MCF 10A (cell line): ENCODE measurements at regions of chr4 and their contacts with region 1.

Region 1: DNA sequence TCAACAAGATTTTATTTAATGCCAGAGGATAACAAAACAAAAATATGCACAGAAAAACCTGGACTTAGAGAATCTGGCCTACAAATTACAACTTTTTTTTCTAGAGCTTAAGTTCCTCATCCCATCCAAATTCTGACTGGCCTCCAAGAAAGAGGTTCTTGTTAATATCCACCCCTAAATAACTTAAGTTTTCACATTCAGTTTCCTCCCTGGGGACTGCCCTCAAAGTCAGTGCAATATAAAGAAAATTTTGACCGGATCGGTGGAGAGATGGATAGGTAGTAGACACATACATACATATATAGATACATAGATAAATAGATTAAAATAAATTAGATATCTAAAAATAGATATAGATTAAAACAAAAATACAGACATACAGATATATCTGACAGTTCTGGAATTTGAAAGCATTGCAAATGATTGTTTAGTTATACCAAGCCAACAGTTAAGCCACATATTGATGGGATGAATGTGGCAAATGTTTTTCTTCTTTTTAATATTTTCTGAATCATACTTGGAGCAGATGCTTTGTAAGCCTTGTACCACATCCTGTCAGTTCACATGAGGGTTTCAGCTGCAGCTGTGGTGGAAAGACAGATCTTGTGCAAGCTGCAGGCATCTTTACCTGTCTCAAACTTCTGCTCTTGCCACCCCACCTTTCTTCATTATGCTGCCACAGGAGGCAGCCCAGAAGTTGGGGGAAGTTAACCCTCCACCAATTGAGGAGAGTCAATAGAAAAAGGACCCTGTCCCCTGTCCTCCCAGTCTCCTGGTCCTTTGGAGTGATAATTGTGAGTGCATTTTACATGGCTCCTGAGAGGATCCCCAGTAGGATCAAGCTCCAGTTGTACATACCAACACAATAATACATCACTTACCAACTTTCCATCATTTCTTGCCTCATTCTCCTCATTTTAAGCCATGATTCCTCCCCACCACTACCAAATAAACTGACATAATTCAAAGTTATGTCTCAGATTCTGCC is 58.5 kb upstream of the PRDM8 start:
- DNase-seq: peak; percentile 56
- H3K4me3 Mint-ChIP-seq: no peak overlapping the region
- H3K27ac Mint-ChIP-seq: no peak overlapping the region
- H3K4me1 Mint-ChIP-seq: peaks cover 30% of the 10 kb centered on the region
- H3K27me3 Mint-ChIP-seq: no peaks in the 10 kb centered on the region
- CTCF ChIP-seq: no peak

Region 2: GRCh38 chr4:80036949-80037685 is 101.7 kb before region 1 on chr4:
- CTCF ChIA-PET with region 1: no interaction called
- POLR2A ChIA-PET with region 1: no interaction called
- intact Hi-C with region 1: no loop called
- DNase-seq: no peak
- H3K4me3 Mint-ChIP-seq: no peak overlapping the region
- H3K27ac Mint-ChIP-seq: peak overlapping the region; percentile 29
- H3K4me1 Mint-ChIP-seq: no peaks in the 10 kb centered on the region
- H3K27me3 Mint-ChIP-seq: no peaks in the 10 kb centered on the region
- CTCF ChIP-seq: no peak

Region 3: GRCh38 chr4:80125252-80126177 is 13.3 kb before region 1 on chr4:
- CTCF ChIA-PET with region 1: interaction called, 5 read pairs
- POLR2A ChIA-PET with region 1: interaction called, 12 read pairs
- intact Hi-C with region 1: no loop called
- DNase-seq: peak; percentile 61
- H3K4me3 Mint-ChIP-seq: no peak overlapping the region
- H3K27ac Mint-ChIP-seq: peak overlapping the region; percentile 70
- H3K4me1 Mint-ChIP-seq: peaks cover 36% of the 10 kb centered on the region
- H3K27me3 Mint-ChIP-seq: no peaks in the 10 kb centered on the region
- CTCF ChIP-seq: peak; percentile 53

Region 4: GRCh38 chr4:80295336-80295735 is 156.5 kb after region 1 on chr4:
- CTCF ChIA-PET with region 1: no interaction called
- POLR2A ChIA-PET with region 1: no interaction called
- intact Hi-C with region 1: no loop called
- DNase-seq: no peak
- H3K4me3 Mint-ChIP-seq: no peak overlapping the region
- H3K27ac Mint-ChIP-seq: no peak overlapping the region
- H3K4me1 Mint-ChIP-seq: no peaks in the 10 kb centered on the region
- H3K27me3 Mint-ChIP-seq: no peaks in the 10 kb centered on the region
- CTCF ChIP-seq: no peak